ENCODE measurements at regions of chr12 and their contacts with region 1.

Region 1: GRCh38 chr12:95942524-95943329 is at the start of gene CCDC38:
- DNase-seq: peak; percentile 79 to 90 (median 86)
- H3K4me3 ChIP-seq: peak within 1 kb of the TSS; percentile 25 to 90 (median 86)
- H3K27ac ChIP-seq: peak within 1 kb of the TSS; percentile 54 to 68
- H3K4me1 ChIP-seq: peaks cover 0 to 13% (median 7%) of the 10 kb centered on the region in 4 experiments
- H3K27me3 ChIP-seq: no peaks in the 10 kb centered on the region

Region 2: DNA sequence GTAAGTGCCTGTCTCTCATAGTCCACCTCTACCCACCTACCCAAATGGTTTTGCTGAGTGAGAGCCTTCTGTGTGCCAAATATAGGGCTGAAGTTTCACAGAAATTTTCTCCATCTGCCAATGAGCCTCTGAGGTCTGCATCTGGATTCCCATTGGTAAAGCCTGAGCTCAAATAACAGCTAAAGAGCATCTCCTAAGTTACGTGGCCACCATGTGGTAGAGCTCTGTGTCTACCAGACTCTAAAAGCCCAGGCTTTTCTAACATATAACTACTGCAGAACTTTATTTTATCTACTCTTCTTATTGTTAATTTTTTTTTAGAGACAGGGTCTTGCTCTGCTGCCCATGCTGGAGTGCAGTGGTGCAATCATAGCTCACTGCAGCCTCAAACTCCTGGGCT is 16.4 kb after region 1 on chr12:
- CTCF ChIA-PET with region 1: interaction called, 30 read pairs
- POLR2A ChIA-PET with region 1: interaction called, 4 read pairs
- DNase-seq: peak; percentile 28 to 58 (median 58)
- H3K4me3 ChIP-seq: no peak overlapping the region
- H3K27ac ChIP-seq: no peak overlapping the region
- H3K4me1 ChIP-seq: peaks cover 0 to 4% (median 0%) of the 10 kb centered on the region in 4 experiments
- H3K27me3 ChIP-seq: peaks cover 0 to 2% (median 0%) of the 10 kb centered on the region in 5 experiments

Region 3: DNA sequence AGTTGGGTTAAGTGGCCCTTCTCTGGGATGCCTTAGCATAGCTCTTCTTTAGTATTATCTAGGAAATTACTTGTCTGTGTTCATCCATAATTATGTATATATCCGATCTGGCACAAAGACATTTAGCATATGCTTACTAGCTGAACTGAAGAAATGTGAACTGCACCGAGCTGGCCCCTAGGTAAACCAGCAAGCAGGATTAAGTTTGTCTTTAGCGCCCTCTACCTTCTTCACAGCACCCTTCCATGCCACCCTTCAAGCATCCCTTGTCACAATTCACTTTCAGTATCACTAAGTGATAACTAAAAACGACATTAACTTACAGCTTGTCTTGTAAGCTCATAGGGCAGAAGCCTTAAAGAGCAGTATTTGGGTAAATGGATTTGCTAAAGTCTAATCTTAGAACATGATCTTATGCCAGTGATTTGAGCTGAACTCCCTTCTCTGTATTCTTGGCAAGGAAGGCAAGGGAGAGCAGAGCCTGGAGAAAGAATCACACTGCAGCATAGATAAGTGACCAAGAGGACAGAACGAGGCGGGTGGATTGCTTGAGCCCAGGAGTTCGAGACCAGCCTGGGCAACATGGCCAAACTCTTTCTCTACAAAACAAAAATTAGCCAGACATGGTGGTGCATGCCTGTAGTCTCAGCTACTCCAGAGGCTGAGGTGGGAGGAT is 56.0 kb after region 1 on chr12:
- CTCF ChIA-PET with region 1: interaction called, 11 read pairs
- POLR2A ChIA-PET with region 1: no interaction called
- DNase-seq: peak; percentile 65 to 90 (median 88)
- H3K4me3 ChIP-seq: no peak overlapping the region
- H3K27ac ChIP-seq: no peak overlapping the region
- H3K4me1 ChIP-seq: peaks cover 0 to 9% (median 5%) of the 10 kb centered on the region in 4 experiments
- H3K27me3 ChIP-seq: no peaks in the 10 kb centered on the region